Calu3 (cell line): ENCODE measurements at regions of chr1 and their contacts with region 1.

Region 1: DNA sequence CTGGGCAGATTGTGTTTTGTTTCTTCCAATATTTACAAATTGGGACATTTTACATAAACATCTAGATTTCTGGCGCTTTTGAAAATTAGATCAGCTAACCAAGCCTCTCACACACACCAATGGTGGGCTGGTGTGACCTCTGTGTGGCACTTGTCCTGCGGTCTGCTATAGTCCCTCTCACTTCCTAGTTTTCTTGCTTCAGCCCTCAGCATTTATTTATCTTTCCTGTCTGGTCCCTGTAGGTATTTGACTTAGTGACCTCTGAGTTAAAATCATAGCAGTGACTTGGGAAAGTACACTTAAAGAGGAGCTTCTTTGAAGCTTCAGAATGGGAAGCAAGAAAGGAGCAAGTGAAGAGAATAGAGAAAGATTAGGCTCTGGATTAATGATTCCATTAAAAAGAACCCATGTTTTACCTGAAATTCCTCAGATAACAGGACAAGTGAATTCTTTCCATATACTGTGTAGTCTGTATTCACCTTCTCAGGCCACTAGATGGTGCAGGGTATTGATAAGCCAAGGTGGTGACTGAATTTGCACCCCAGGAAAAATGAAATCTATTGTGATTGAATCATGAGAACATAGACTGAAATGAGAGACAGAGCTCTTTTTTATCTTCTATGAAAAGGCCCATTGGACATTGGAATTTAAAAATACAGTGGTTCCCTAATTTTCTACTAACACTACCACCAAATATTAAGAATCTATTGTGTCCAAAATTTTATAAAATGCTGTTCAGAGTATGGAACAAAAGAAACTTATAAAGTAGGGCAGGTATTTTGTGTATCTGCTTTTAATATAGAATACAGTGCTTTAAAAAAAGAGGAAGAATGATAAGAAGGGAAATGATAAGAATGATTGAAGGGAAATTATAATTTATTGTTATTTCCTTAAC is 7.1 kb upstream of the DIPK1A start:
- DNase-seq: peak; percentile 17
- H3K4me3 Mint-ChIP-seq: no peak overlapping the region
- H3K27ac Mint-ChIP-seq: no peak overlapping the region
- H3K4me1 Mint-ChIP-seq: peaks cover 8% of the 10 kb centered on the region
- H3K27me3 Mint-ChIP-seq: no peaks in the 10 kb centered on the region
- CTCF ChIP-seq: peak; percentile 56

Region 2: GRCh38 chr1:92817986-92818764 is 150.2 kb before region 1 on chr1:
- CTCF ChIA-PET with region 1: no interaction called
- intact Hi-C with region 1: no loop called
- DNase-seq: peak; percentile 30
- H3K4me3 Mint-ChIP-seq: no peak overlapping the region
- H3K27ac Mint-ChIP-seq: peak overlapping the region; percentile 0
- H3K4me1 Mint-ChIP-seq: peaks cover 36% of the 10 kb centered on the region
- H3K27me3 Mint-ChIP-seq: no peaks in the 10 kb centered on the region
- CTCF ChIP-seq: peak; percentile 49

Region 3: DNA sequence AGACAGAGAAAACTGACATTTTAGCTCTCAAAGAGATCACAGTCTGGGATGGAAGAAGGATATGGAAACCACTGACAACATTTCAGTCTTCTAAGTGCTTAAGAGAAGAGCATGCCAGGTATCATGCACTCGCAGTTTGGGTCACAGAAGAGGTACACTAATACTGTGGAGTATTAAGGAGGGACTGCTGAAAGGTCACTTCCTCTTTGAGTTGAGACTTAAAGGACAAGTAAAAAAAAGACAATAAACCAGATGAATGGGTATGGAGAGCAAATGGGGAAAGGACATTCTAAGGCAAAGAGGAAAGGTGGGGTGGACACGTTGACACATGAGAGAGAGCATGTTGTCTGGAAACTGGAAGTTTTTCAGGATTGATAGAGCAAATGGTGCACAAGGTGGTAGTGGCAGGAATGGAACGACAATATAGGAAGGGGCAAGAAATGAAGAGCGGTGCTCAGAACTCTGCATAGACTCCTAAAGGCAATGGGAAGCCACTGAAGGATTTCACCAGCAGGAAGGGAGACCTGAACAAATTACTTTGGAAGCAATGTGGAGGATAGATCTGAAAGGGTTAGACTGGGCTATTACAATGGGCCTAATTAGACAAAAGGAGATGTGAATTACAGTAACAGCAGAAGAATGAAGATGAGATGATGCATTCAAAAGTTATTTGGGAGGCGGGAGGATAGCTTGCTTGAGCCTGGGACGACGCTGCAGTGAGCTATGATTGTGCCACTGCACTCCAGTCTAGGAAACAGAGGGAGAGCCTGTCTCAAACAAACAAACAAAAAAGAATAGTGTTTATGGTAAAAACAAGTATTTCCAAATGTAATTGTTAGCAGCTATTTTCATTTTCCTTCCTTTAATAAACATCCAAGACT is 18.2 kb before region 1 on chr1:
- CTCF ChIA-PET with region 1: no interaction called
- intact Hi-C with region 1: no loop called
- DNase-seq: no peak
- H3K4me3 Mint-ChIP-seq: no peak overlapping the region
- H3K27ac Mint-ChIP-seq: no peak overlapping the region
- H3K4me1 Mint-ChIP-seq: no peaks in the 10 kb centered on the region
- H3K27me3 Mint-ChIP-seq: no peaks in the 10 kb centered on the region
- CTCF ChIP-seq: no peak

Region 4: GRCh38 chr1:92994105-92994712 is 25.8 kb after region 1 on chr1:
- CTCF ChIA-PET with region 1: interaction called, 4 read pairs
- intact Hi-C with region 1: loop called (anchors 1 kb)
- DNase-seq: peak; percentile 62
- H3K4me3 Mint-ChIP-seq: no peak overlapping the region
- H3K27ac Mint-ChIP-seq: no peak overlapping the region
- H3K4me1 Mint-ChIP-seq: peaks cover 19% of the 10 kb centered on the region
- H3K27me3 Mint-ChIP-seq: no peaks in the 10 kb centered on the region
- CTCF ChIP-seq: peak; percentile 72

Region 5: DNA sequence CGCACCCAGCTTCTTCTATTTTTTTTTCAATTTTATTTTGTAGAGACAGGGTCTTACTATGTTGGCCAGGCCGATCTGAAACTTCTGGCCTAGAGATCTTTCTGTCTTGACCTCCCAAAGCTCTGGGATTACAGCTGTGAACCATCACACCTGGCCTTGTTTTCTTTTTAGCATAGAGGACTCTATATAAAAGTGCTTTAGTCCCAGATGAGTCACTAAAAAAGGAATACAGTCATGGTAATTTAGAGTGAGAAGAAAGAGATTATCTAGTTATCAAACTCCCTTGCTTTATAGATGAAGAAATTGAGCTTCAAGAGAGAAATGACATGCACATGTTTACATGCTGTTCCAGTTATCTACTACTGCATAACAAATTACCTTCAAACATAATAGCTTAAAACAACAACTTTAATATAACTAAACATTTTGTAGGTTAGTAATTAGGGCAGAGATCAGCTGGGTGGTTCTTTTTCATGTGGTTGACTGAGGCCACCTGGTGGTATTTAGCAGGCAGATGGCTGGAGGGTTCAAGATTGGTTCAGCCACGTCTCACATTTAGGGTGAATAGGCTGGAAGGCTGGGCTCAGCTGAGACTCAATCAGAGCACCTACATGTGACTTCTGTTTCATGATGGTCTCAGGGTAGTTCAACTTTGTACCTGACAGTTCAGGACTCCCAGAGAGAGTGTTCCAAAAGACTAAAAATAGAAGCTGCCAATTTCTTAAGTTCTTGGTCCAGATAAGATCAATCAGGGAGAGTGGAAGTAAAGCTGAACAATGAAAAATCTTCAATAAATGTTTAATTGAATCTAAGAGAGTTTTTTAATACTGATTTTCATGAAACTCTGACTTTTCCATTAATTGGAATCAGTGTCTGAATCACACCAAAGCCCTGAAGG is 93.8 kb after region 1 on chr1:
- CTCF ChIA-PET with region 1: no interaction called
- intact Hi-C with region 1: loop called (anchors 2 kb)
- DNase-seq: peak; percentile 47
- H3K4me3 Mint-ChIP-seq: no peak overlapping the region
- H3K27ac Mint-ChIP-seq: no peak overlapping the region
- H3K4me1 Mint-ChIP-seq: no peaks in the 10 kb centered on the region
- H3K27me3 Mint-ChIP-seq: peaks cover 13% of the 10 kb centered on the region
- CTCF ChIP-seq: peak; percentile 51